Caco-2 (cell line): ENCODE measurements at regions of chr5 and their contacts with region 1.

Region 1: DNA sequence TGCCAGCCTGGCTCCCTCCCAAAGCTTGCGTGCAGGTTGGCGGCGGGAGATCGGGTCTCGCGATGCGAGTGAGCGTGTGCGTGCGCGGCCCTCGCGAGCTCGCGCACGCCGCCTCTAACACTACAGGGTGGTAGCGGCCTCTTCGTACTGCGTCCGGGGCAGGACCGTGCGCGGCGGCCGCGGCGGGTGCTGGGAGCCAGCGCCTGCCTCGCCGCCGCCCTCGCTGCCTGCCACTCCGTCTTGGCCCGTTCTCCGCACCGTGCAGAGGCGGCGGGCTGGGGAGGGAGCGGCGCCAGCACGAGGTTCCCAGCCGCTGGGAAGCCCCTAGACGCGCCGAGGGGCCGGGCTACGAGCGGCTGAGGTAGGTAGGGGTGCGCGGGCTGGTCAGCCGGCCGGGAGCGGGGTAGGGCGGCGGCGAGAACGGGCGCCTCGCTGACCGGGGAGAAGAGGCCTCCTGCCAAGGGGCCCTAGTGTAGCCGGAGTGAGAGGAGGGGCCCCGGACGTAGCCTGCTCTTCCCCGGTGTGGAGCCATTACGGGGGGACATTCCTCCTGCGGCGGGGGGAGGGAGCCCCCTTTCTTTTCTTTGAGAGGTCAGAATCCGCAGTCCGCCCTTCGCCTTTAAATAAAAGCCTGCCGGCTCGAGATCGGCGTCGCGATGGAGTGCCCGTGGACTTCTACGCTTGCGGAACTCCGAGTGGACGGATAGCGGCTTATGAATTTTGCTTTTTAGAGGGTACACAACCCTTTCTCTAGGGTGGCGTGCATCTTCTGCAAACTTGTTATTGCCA is at the start of gene C5orf24:
- DNase-seq: peak; percentile 93 to 94
- H3K4me3 ChIP-seq: peak within 1 kb of the TSS; percentile 96
- H3K4me3 Mint-ChIP-seq: peak within 1 kb of the TSS; percentile 97
- H3K27ac Mint-ChIP-seq: peak within 1 kb of the TSS; percentile 97
- H3K4me1 ChIP-seq: peaks cover 13% of the 10 kb centered on the region; the same call in 1 of the 2 replicates
- H3K4me1 Mint-ChIP-seq: peaks cover 6% of the 10 kb centered on the region
- H3K27me3 ChIP-seq: no peaks in the 10 kb centered on the region
- H3K27me3 Mint-ChIP-seq: no peaks in the 10 kb centered on the region
- CTCF ChIP-seq: no peak
- total RNA-seq, gene C5orf24: 41.2 and 48.7 TPM in 2 replicates

Region 2: GRCh38 chr5:134070725-134071613 is 775.1 kb before region 1 on chr5:
- CTCF ChIA-PET with region 1: no interaction called
- POLR2A ChIA-PET with region 1: no interaction called
- intact Hi-C with region 1: no loop called
- DNase-seq: peak; percentile 63 to 70
- H3K4me3 ChIP-seq: peak overlapping the region; percentile 46
- H3K4me3 Mint-ChIP-seq: peak overlapping the region; percentile 65
- H3K27ac Mint-ChIP-seq: no peak overlapping the region
- H3K4me1 ChIP-seq: peaks cover 8% of the 10 kb centered on the region; the same call in 1 of the 2 replicates
- H3K4me1 Mint-ChIP-seq: no peaks in the 10 kb centered on the region
- H3K27me3 ChIP-seq: no peaks in the 10 kb centered on the region
- H3K27me3 Mint-ChIP-seq: no peaks in the 10 kb centered on the region
- CTCF ChIP-seq: peak in 1 of 2 experiments; percentile 23

Region 3: DNA sequence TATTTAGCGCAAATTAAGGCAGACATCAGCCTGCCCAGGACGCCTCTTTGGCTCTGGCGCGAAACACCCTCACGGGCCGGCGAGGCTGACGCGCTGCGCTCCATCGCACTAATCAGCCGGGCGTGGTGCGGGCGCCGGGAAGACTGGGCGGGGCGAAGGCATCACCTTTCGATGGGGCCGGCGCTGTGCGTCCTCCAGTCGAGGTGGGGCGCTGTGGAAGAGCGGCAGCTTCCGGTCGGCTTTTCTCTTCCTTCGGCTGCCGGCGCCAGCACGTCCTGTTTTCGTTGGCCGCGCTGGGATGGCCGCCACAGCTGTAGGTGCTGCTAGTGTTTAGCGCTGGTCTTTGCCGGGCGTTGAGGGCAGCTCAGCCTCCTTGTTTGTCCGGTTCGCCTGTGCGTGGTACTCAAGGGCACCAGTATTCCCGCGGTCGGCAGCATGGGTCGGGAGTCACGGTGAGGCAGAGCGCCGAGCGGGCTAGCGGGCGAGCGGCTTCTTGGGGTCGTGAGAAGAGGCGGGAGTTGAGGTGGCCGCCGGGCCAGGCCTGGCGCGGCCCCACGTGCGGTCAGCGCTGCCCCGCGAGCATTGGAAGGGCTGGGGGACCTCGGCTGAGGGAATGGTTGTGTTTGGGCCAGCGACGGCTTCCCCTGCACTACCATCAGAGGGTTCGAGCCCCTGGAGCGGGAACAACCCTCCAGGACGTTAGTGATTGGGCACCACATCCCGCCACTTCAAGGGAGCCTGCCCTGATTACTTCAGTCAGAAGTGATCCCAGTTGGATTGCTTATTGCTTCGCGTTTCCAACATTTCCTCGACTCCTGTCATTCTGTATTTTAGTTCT is 87.3 kb before region 1 on chr5 and contains the start of gene DDX46:
- CTCF ChIA-PET with region 1: no interaction called
- POLR2A ChIA-PET with region 1: no interaction called
- intact Hi-C with region 1: loop called (anchors 2 kb)
- DNase-seq: peak; percentile 95 to 96
- H3K4me3 ChIP-seq: peak within 1 kb of the TSS; percentile 71
- H3K4me3 Mint-ChIP-seq: peak within 1 kb of the TSS; percentile 100
- H3K27ac Mint-ChIP-seq: peak within 1 kb of the TSS; percentile 100
- H3K4me1 ChIP-seq: peaks cover 7% of the 10 kb centered on the region; the same call in 1 of the 2 replicates
- H3K4me1 Mint-ChIP-seq: peaks cover 17% of the 10 kb centered on the region
- H3K27me3 ChIP-seq: no peaks in the 10 kb centered on the region
- H3K27me3 Mint-ChIP-seq: no peaks in the 10 kb centered on the region
- CTCF ChIP-seq: peak; percentile 71 to 87
- total RNA-seq, gene DDX46: 96.1 and 116 TPM in 2 replicates

Region 4: DNA sequence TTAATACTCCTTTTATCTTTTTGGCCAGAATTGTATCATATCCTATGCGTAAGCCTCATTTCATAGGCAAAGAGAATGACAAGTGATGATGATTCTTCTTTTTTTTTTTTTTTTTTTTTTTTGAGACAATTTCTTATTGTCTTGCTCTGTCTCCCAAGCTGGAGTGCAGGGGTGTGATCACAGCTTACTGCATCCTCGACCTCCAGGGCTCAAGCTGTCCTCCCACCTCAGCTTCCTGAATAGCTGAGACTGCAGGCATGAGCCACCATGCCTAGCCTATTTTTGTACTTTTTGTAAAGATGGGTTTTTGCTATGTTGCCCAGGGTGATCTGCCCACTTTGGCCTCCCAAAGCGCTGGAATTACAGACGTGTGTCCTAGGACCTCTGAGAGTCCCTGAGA is 42.2 kb before region 1 on chr5:
- CTCF ChIA-PET with region 1: no interaction called
- POLR2A ChIA-PET with region 1: no interaction called
- intact Hi-C with region 1: no loop called
- DNase-seq: no peak
- H3K4me3 ChIP-seq: no peak overlapping the region
- H3K4me3 Mint-ChIP-seq: no peak overlapping the region
- H3K27ac Mint-ChIP-seq: no peak overlapping the region
- H3K4me1 ChIP-seq: no peaks in the 10 kb centered on the region
- H3K4me1 Mint-ChIP-seq: no peaks in the 10 kb centered on the region
- H3K27me3 ChIP-seq: no peaks in the 10 kb centered on the region
- H3K27me3 Mint-ChIP-seq: no peaks in the 10 kb centered on the region
- CTCF ChIP-seq: no peak

Region 5: DNA sequence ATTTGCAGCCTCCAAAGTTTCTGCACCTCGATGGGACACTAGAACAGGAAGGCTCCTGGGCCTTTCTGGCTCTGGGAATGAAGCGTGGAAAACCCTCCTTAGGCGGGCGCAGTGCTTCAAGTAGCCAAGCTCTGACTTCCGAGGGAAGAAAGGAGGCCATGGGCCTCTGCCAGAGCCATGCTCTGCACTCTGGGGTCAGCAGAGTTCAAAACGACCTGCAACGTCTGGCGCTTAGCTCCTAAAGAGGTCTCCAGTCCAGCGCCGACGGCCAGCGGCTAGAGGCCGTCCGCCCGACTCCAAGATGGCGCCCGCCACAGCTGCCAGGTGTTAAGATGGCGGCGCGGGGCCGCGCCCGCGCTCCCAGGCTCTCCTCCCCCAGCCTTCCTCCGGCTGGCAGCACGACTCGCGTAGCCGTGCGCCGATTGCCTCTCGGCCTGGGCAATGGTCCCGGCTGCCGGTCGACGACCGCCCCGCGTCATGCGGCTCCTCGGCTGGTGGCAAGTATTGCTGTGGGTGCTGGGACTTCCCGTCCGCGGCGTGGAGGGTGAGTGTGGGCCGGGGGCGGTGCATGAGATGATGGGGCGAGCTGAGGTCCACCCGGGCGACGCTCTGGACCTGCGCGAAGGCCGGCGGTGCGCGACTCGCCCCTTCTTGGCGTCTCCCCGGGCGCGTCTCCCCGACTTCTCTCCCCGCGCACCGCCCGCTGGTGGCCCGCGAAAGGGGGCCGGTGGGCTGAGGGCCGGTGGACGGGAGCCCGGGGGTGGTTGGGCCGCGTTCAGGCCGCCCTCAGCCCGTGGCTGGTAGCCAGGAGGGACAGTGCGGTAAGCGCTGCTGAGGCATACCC is 28.2 kb after region 1 on chr5 and contains the start of gene TXNDC15:
- CTCF ChIA-PET with region 1: interaction called, 3 read pairs
- POLR2A ChIA-PET with region 1: interaction called, 3 read pairs
- intact Hi-C with region 1: loop called (anchors 1 kb)
- DNase-seq: peak; percentile 83 to 89
- H3K4me3 ChIP-seq: peak within 1 kb of the TSS; percentile 88
- H3K4me3 Mint-ChIP-seq: peak within 1 kb of the TSS; percentile 93
- H3K27ac Mint-ChIP-seq: peak within 1 kb of the TSS; percentile 90
- H3K4me1 ChIP-seq: no peaks in the 10 kb centered on the region; the same call in 1 of the 2 replicates
- H3K4me1 Mint-ChIP-seq: peaks cover 6% of the 10 kb centered on the region
- H3K27me3 ChIP-seq: no peaks in the 10 kb centered on the region
- H3K27me3 Mint-ChIP-seq: no peaks in the 10 kb centered on the region
- CTCF ChIP-seq: no peak
- total RNA-seq, gene TXNDC15: 31.4 and 39.6 TPM in 2 replicates

Region 6: DNA sequence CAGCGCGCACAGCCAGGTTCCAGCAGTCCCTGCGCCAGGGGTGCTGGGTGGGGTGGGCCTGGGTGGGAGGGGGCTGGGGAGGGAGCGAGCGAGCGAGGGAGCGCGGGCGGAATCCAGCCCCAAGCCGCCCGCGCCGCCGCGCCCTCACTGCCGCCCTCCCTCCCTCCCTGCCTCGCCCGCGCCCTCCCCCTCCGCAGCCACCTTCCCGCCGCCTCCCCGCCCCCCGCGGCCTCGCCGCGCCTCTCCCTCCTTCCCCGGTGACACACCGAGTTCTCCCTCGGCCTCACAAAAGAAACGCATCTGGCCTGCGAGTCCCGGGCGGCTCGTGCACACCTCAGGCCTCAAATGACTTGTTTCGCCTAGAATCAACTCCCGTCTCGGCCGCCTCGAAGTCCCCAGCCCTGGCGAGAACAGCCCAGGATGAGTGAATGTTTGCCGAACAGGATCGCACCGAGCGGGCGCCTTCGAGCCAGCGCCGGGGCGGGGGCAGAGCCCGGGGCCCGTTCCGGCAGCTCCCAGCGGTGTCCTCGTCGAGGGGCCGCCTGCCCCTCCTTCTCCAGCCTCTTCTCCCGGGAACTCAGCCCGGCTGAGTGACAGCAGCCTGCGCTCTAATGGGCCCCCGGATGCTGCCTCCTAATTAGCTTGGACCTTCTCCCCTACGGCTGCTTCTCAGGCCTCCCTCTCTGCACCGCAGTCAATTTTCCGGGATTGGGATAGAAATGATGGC is 188.4 kb after region 1 on chr5:
- CTCF ChIA-PET with region 1: no interaction called
- POLR2A ChIA-PET with region 1: no interaction called
- intact Hi-C with region 1: no loop called
- DNase-seq: peak; percentile 88 to 89
- H3K4me3 ChIP-seq: peak overlapping the region; percentile 83
- H3K4me3 Mint-ChIP-seq: peak overlapping the region; percentile 89
- H3K27ac Mint-ChIP-seq: peak overlapping the region; percentile 81
- H3K4me1 ChIP-seq: peaks cover 27% of the 10 kb centered on the region
- H3K4me1 Mint-ChIP-seq: peaks cover 31% of the 10 kb centered on the region
- H3K27me3 ChIP-seq: no peaks in the 10 kb centered on the region
- H3K27me3 Mint-ChIP-seq: no peaks in the 10 kb centered on the region
- CTCF ChIP-seq: no peak

Region 7: DNA sequence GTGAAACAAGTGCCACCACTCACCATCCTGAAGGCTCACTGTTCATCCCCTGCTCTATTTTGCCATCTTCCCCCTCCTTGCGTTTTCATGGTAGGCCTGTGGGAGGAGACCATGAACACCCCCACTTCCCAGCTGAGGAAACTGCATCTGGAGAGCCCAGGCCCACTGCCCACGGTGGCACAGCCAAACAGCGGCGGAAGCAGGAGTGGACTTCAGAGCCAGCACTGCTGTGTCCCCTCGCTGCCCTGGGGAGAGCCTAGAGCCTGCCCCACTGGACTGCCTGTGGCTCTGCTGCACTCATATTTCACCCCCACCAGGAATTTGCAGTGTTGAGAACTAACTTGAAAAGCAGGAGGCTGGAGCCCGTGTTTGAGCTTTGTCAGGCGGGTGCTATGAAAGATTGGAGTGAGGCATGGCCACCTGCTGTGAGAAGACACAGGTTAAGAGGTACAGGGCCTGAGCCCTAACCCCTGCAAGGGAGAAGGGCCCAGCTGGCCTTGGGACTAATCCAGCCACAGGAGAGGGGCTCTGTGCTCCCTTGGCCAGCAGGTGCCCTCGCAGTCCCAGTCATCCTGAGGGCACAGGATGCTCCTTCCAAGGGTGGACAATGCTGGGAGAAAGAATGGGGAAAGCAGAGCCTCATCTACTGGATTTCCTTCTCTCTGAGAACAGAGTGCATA is 474.0 kb after region 1 on chr5:
- CTCF ChIA-PET with region 1: no interaction called
- POLR2A ChIA-PET with region 1: no interaction called
- intact Hi-C with region 1: no loop called
- DNase-seq: peak; percentile 44 to 51
- H3K4me3 ChIP-seq: no peak overlapping the region
- H3K4me3 Mint-ChIP-seq: no peak overlapping the region
- H3K27ac Mint-ChIP-seq: no peak overlapping the region
- H3K4me1 ChIP-seq: peaks cover 16% of the 10 kb centered on the region
- H3K4me1 Mint-ChIP-seq: peaks cover 18% of the 10 kb centered on the region
- H3K27me3 ChIP-seq: no peaks in the 10 kb centered on the region
- H3K27me3 Mint-ChIP-seq: no peaks in the 10 kb centered on the region
- CTCF ChIP-seq: peak; percentile 8 to 54